ENCODE measurements at regions of chr6 and their contacts with region 1.

Region 1: GRCh38 chr6:105326833-105327770 is 75.8 kb downstream of the PREP start:
- DNase-seq: peak in 3 of 4 donors; percentile 15 to 56 (median 27)
- ATAC-seq: peak; percentile 82
- H3K4me3 ChIP-seq: no peak overlapping the region
- H3K27ac ChIP-seq: peak overlapping the region; percentile 8 to 75 (median 67)
- H3K4me1 ChIP-seq: peaks cover 27% of the 10 kb centered on the region
- H3K27me3 ChIP-seq: no peaks in the 10 kb centered on the region
- CTCF ChIP-seq: no peak
- POLR2A ChIP-seq: no peak

Region 2: GRCh38 chr6:104669483-104669882 is 657.6 kb before region 1 on chr6:
- intact Hi-C with region 1: no loop called
- DNase-seq: no peak
- ATAC-seq: no peak
- H3K4me3 ChIP-seq: no peak overlapping the region
- H3K27ac ChIP-seq: no peak overlapping the region
- H3K4me1 ChIP-seq: no peaks in the 10 kb centered on the region
- H3K27me3 ChIP-seq: no peaks in the 10 kb centered on the region
- CTCF ChIP-seq: no peak
- POLR2A ChIP-seq: no peak

Region 3: GRCh38 chr6:105402939-105403935 is 76.1 kb after region 1 on chr6 and contains the start of gene PREP:
- intact Hi-C with region 1: loop called (anchors 10 kb)
- DNase-seq: peak; percentile 85 to 90 (median 87)
- ATAC-seq: peak; percentile 95
- H3K4me3 ChIP-seq: peak within 1 kb of the TSS; percentile 37 to 88
- H3K27ac ChIP-seq: peak within 1 kb of the TSS; percentile 18 to 84 (median 76)
- H3K4me1 ChIP-seq: peaks cover 36% of the 10 kb centered on the region
- H3K27me3 ChIP-seq: no peaks in the 10 kb centered on the region
- CTCF ChIP-seq: peak; percentile 33 to 92 (median 80)
- POLR2A ChIP-seq: peak; percentile 27 to 67 (median 40)
- total RNA-seq, gene PREP: 10.1 to 21.8 TPM

Region 4: GRCh38 chr6:105482227-105482844 is 155.2 kb after region 1 on chr6:
- intact Hi-C with region 1: no loop called
- DNase-seq: peak in 3 of 4 donors; percentile 21 to 36 (median 21)
- ATAC-seq: no peak
- H3K4me3 ChIP-seq: no peak overlapping the region
- H3K27ac ChIP-seq: no peak overlapping the region
- H3K4me1 ChIP-seq: no peaks in the 10 kb centered on the region
- H3K27me3 ChIP-seq: no peaks in the 10 kb centered on the region
- CTCF ChIP-seq: no peak
- POLR2A ChIP-seq: no peak

Measured in body of pancreas (tissue), 4 donors.